Heart right ventricle (tissue), 16 donors: ENCODE measurements at regions of chr15 and their contacts with region 1.

Region 1: GRCh38 chr15:75801859-75802593 is 41.2 kb upstream of the UBE2Q2 start:
- DNase-seq: peak; percentile 78 to 83
- ATAC-seq: peak; percentile 95 to 99 (median 97)
- H3K4me3 ChIP-seq: peak overlapping the region in 8 of 10 donors; percentile 11 to 38 (median 28)
- H3K27ac ChIP-seq: no peak overlapping the region
- H3K4me1 ChIP-seq: peaks cover 0 to 17% (median 5%) of the 10 kb centered on the region in 9 donors
- H3K27me3 ChIP-seq: peaks cover 0 to 42% (median 25%) of the 10 kb centered on the region in 7 donors
- CTCF ChIP-seq: peak; percentile 82 to 98 (median 93)

Region 2: GRCh38 chr15:75732809-75733451 is 69.1 kb before region 1 on chr15:
- intact Hi-C with region 1: loop called in 9 of 10 experiments (anchors 1 to 10 kb)
- DNase-seq: peak; percentile 70 to 79
- ATAC-seq: peak; percentile 63 to 81 (median 71)
- H3K4me3 ChIP-seq: peak overlapping the region in 1 of 10 donors; percentile 8
- H3K27ac ChIP-seq: peak overlapping the region in 2 of 10 donors; percentile 31 to 55
- H3K4me1 ChIP-seq: peaks cover 10 to 42% (median 23%) of the 10 kb centered on the region in 9 donors
- H3K27me3 ChIP-seq: peaks cover 0 to 3% (median 0%) of the 10 kb centered on the region in 7 donors
- CTCF ChIP-seq: peak; percentile 78 to 94 (median 87)